ENCODE measurements at regions of chr22 and their contacts with region 1.

Region 1: DNA sequence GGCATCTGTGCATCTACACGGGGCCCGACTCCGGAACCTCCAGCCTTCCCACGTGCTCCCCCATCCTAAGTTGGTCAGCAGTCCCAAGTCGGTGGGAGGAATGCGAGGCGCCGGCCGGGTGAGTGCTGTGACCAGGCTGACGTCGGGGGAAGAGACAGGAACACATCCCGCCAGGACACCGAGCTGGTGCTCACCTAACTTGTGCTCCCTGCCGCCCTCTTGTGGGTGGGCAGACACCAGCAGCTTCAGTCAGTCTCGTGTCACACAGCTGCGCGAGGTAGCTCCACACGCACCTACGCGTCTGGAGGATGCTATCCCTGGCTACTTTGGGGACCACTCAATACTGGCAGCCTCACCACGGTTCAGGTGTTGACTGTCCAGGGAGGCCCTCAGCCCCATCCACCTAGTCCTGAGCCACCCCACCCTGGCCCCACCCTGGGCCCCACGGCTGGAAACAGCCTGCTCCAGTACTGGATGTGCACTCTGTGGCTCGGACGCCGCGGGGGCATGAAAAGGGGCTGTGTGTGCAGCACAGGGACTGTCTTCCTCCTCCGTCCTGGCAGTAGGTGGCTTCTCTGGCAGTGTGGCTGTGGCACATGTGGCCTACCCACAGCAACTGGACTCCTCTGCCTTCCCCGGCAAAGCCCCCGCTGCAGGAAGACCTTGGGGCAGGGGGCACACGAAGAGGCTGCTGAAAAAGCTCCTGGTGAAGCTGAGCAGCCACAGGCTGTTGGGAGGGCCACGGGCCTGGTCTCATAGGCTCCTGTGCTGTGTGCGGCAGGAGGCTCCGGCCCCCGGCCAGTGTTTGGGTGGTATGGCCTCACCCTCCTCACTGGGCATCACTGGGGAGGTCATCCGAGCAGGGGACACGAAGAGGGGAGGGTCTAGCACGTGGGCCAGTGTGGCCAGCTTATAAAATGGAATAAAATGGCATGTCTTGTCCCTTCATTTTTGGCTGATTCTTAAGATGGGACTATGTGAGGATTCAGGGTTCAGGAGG is 11.2 kb upstream of the BID start:
- DNase-seq: peak; percentile 85 to 91 (median 87)
- ATAC-seq: peak; percentile 82
- H3K4me3 ChIP-seq: no peak overlapping the region
- H3K27ac ChIP-seq: peak overlapping the region; percentile 77; the same call in 1 of the 3 replicates
- H3K4me1 ChIP-seq: peaks cover 33 to 68% of the 10 kb centered on the region in 2 experiments; a peak in 4 of 5 replicates
- H3K27me3 ChIP-seq: no peaks in the 10 kb centered on the region; a peak in 1 of 5 replicates
- CTCF ChIP-seq: peak; percentile 88 to 97 (median 92)
- EP300 ChIP-seq: no peak
- POLR2A ChIP-seq: no peak
- RAD21 ChIP-seq: peak; percentile 44 to 84

Region 2: GRCh38 chr22:17773606-17774205 is 11.8 kb before region 1 on chr22:
- CTCF ChIA-PET with region 1: no interaction called
- POLR2A ChIA-PET with region 1: interaction called, 54 read pairs
- in situ Hi-C with region 1: no loop called
- intact Hi-C with region 1: no loop called
- DNase-seq: peak; percentile 72 to 88 (median 83)
- ATAC-seq: peak; percentile 81
- H3K4me3 ChIP-seq: peak overlapping the region; percentile 76
- H3K27ac ChIP-seq: peak overlapping the region; percentile 81; the same call in 2 of the 3 replicates
- H3K4me1 ChIP-seq: peaks cover 19 to 74% of the 10 kb centered on the region in 2 experiments
- H3K27me3 ChIP-seq: no peaks in the 10 kb centered on the region
- CTCF ChIP-seq: no peak
- EP300 ChIP-seq: no peak
- POLR2A ChIP-seq: 0 out of 2 replicates have a peak, but pooled peaks have one; percentile 24
- RAD21 ChIP-seq: no peak

Region 3: DNA sequence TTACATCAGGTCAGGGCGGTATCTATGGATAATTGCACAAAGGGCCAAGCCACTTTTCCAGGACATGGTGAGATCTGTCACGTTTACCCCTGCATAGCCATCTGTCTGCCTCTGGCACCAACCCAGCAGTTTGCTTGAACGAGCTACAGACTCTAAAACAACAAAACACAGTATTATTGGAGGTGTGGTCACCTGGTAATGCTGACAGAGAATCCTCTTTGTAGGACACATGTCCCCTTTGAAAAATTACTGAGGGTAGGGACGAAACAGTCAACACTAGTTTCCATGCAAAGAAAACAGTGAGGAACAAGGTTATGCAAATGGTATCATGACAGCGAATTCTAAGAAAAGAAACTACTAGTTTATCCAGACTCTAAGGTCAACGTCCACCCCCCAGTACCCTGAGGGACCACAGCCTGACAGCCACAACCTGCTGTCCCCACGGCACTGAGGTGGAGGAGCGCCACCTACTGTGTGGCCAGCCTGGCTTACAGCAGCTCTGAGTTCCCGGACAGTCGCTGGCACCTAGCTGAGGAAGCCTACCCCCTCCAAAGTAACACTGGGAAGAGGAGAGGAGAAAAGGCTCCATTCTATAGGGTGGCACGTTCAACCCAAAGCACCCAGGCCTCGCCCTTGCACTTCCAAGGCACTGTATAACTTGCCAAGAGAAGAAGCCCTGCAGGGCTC is 106.1 kb after region 1 on chr22:
- CTCF ChIA-PET with region 1: no interaction called
- POLR2A ChIA-PET with region 1: no interaction called
- in situ Hi-C with region 1: no loop called
- intact Hi-C with region 1: no loop called
- DNase-seq: peak; percentile 51 to 59 (median 55)
- ATAC-seq: peak; percentile 84
- H3K4me3 ChIP-seq: no peak overlapping the region
- H3K27ac ChIP-seq: no peak overlapping the region
- H3K4me1 ChIP-seq: no peaks in the 10 kb centered on the region
- H3K27me3 ChIP-seq: no peaks in the 10 kb centered on the region
- CTCF ChIP-seq: peak; percentile 67 to 78 (median 68)
- EP300 ChIP-seq: no peak
- POLR2A ChIP-seq: no peak
- RAD21 ChIP-seq: peak; percentile 26 to 73; a peak in 3 of 4 replicates